ENCODE measurements at regions of chr12 and their contacts with region 1.

Region 1: DNA sequence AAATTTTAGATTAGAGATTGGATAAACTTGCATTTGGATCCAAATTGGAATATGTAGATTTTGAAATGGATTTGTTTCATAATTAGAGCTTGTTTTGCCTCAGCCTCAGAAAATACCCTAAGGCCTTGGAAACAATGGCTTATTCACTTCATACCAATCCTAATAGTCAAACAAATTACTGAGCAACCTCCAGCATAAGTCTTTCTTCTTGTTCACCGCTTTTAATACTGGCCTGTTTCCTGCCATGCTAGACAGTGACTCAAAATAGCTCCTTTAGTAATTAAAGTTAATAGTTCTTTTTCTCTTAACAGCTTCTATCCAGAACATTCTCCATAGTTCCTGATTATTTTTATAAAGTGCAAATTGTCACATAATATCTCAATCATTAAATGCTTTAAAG is 110.9 kb upstream of the DNM1L start:
- DNase-seq: peak; percentile 25 to 89
- H3K4me3 ChIP-seq: no peak overlapping the region
- H3K27ac ChIP-seq: peak overlapping the region; percentile 84
- H3K4me1 ChIP-seq: peaks cover 33% of the 10 kb centered on the region
- H3K27me3 ChIP-seq: no peaks in the 10 kb centered on the region
- CTCF ChIP-seq: no peak

Region 2: DNA sequence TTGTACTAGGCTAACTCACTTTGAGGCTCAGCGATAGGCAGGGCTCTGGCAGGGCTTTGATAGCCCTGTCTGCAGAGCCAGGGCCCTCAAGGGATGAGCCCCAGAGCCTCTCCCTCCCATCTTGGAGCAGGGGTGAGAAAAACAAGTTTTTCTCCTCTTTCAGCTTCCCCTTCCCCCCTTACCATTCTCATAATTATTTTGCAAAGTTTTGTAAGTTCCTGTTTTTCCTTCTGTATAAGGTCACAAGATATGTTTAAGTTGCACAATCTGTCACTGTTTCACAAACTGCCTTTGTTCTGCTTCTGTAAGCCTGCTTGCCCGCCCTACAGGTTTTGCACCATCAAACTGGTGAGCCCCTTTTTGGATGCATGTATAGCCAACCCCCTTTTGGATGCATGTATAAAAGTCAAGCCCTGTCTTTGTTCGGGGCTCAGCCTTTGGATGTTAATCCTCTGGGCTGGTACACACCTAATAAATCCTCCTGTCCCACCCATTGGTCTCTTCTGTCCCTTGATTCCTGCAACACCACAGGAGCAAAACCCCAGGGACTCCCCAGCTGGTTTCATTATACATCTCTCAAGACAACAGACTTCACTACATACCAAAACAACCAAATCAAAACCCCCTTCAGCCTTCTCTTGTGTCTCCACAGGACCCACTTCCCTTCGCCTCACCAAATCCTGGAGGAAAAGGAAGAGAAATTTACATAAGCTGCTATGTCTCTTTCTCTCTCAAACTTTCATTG is 661.5 kb before region 1 on chr12:
- CTCF ChIA-PET with region 1: interaction called, 15 read pairs
- POLR2A ChIA-PET with region 1: no interaction called
- intact Hi-C with region 1: no loop called
- DNase-seq: no peak
- H3K4me3 ChIP-seq: no peak overlapping the region
- H3K27ac ChIP-seq: no peak overlapping the region
- H3K4me1 ChIP-seq: no peaks in the 10 kb centered on the region
- H3K27me3 ChIP-seq: no peaks in the 10 kb centered on the region
- CTCF ChIP-seq: no peak

Region 3: DNA sequence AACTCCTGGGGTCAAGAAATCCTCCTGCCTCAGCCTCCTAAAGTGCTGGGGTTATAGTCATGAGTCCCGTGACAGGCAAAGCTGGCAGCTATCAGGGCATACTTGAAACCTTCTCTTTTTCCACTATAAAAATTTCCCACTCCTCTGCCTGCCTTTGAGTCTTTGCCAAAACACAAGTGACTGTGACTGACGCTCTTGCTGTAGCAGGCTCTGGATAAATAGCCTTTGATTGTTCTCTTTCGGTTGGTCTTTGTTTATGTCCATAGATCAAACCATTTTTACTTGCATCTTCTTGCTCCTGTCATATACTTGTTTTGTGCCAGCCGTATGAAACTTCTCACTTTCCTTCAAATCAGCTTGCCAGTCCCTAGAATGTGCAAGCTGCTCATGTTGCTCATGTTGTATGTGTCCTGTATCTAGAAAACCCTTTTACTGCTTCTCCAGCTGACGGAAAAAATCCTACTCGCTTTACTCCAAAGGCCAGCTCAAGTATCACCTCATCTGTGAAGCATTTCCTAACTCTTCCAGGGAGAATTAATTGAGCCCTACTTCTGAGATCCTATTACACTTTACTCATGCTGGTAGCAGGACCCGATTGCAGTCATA is 535.9 kb before region 1 on chr12:
- CTCF ChIA-PET with region 1: no interaction called
- POLR2A ChIA-PET with region 1: no interaction called
- intact Hi-C with region 1: no loop called
- DNase-seq: no peak
- H3K4me3 ChIP-seq: no peak overlapping the region
- H3K27ac ChIP-seq: no peak overlapping the region
- H3K4me1 ChIP-seq: no peaks in the 10 kb centered on the region
- H3K27me3 ChIP-seq: no peaks in the 10 kb centered on the region; the same call in 1 of the 2 replicates
- CTCF ChIP-seq: no peak

Region 4: GRCh38 chr12:32522331-32523221 is 45.7 kb before region 1 on chr12:
- CTCF ChIA-PET with region 1: no interaction called
- POLR2A ChIA-PET with region 1: no interaction called
- intact Hi-C with region 1: no loop called
- DNase-seq: no peak
- H3K4me3 ChIP-seq: no peak overlapping the region
- H3K27ac ChIP-seq: no peak overlapping the region
- H3K4me1 ChIP-seq: no peaks in the 10 kb centered on the region
- H3K27me3 ChIP-seq: no peaks in the 10 kb centered on the region
- CTCF ChIP-seq: no peak

Region 5: GRCh38 chr12:32918890-32919801 is 350.9 kb after region 1 on chr12:
- CTCF ChIA-PET with region 1: no interaction called
- POLR2A ChIA-PET with region 1: no interaction called
- intact Hi-C with region 1: no loop called
- DNase-seq: peak in 1 of 2 experiments; percentile 63
- H3K4me3 ChIP-seq: no peak overlapping the region
- H3K27ac ChIP-seq: peak overlapping the region; percentile 45; the same call in 1 of the 2 replicates
- H3K4me1 ChIP-seq: peaks cover 45% of the 10 kb centered on the region
- H3K27me3 ChIP-seq: no peaks in the 10 kb centered on the region
- CTCF ChIP-seq: peak; percentile 60

Measured in PC-9 (cell line).